ENCODE measurements at regions of chr12 and their contacts with region 1.

Region 1: GRCh38 chr12:26937875-26938700 is at the starts of genes FGFR1OP2 and INTS13:
- DNase-seq: peak; percentile 90 to 99 (median 96)
- ATAC-seq: peak; percentile 89
- H3K4me3 ChIP-seq: peak within 1 kb of the TSS; percentile 92 to 97
- H3K4me3 Mint-ChIP-seq: peak within 1 kb of the TSS; percentile 98
- H3K27ac ChIP-seq: peak within 1 kb of the TSS; percentile 89 to 94
- H3K27ac Mint-ChIP-seq: peak within 1 kb of the TSS; percentile 97
- H3K4me1 ChIP-seq: peaks cover 47% of the 10 kb centered on the region
- H3K4me1 Mint-ChIP-seq: peaks cover 74% of the 10 kb centered on the region
- H3K27me3 ChIP-seq: no peaks in the 10 kb centered on the region
- H3K27me3 Mint-ChIP-seq: no peaks in the 10 kb centered on the region
- CTCF ChIP-seq: no peak
- total RNA-seq, gene FGFR1OP2: 44.1 to 47.5 TPM
- total RNA-seq, gene INTS13: 11.8 to 12.1 TPM

Region 2: DNA sequence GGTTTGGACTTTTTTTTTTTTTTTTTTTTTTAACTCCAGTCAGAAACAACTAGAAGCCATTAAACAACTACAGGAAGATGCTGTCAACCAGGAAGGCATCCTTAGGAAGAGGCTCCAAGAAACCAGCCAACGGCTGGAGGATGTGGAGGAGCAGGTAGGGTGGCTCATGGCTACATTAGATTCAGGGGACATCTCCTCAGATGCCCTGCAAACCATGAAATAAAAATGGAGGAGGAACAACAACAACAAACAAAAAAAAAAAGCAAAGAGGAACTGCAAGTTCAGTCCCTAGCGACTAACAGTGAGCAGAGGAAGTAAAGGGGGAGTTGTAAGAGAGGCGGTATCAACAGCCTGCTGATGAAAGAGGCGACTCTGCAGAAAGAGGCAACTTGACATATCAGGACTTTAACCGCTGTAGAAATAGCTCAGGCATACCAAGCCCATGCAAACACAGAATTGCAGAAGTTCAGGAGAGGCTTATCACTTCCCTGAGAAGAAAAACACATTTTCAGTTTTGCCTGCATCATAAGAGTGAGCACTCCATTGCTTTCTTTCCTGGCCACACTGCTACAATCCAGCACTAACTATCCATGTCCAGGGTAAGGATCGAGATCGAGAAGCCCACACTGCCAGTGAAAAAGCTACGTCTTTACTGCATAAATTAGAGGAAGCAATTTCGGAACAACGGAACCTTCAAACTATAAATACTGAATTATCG is 1885.7 kb before region 1 on chr12:
- CTCF ChIA-PET with region 1: no interaction called
- POLR2A ChIA-PET with region 1: no interaction called
- intact Hi-C with region 1: loop called in 1 of 2 experiments (anchors 10 kb)
- DNase-seq: peak; percentile 20 to 90 (median 51)
- ATAC-seq: peak; percentile 70
- H3K4me3 ChIP-seq: peak overlapping the region; percentile 67 to 76
- H3K4me3 Mint-ChIP-seq: peak overlapping the region; percentile 97
- H3K27ac ChIP-seq: peak overlapping the region; percentile 79 to 92
- H3K27ac Mint-ChIP-seq: peak overlapping the region; percentile 98
- H3K4me1 ChIP-seq: peaks cover 38% of the 10 kb centered on the region
- H3K4me1 Mint-ChIP-seq: peaks cover 41% of the 10 kb centered on the region
- H3K27me3 ChIP-seq: no peaks in the 10 kb centered on the region
- H3K27me3 Mint-ChIP-seq: no peaks in the 10 kb centered on the region
- CTCF ChIP-seq: no peak

Region 3: DNA sequence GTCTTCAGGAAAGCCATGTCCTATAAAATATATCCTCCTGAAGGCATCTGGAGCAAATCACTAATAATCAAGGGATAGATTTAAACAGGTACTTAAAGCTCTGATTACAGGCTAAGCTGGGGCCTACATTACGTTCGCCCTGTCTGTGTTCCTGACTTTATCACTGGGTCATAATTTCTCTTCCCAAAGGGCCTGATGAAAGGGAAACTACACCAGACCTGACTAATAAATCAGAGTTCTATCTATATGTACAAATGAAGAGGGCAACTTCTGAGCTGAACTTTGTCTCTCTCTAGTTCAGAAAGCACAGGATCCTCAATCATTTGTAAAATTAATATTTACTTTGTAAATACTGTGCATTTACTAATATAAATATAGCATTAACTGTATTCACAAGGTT is 1023.5 kb before region 1 on chr12:
- CTCF ChIA-PET with region 1: no interaction called
- POLR2A ChIA-PET with region 1: no interaction called
- intact Hi-C with region 1: no loop called
- DNase-seq: no peak
- ATAC-seq: no peak
- H3K4me3 ChIP-seq: no peak overlapping the region
- H3K4me3 Mint-ChIP-seq: no peak overlapping the region
- H3K27ac ChIP-seq: no peak overlapping the region
- H3K27ac Mint-ChIP-seq: no peak overlapping the region
- H3K4me1 ChIP-seq: no peaks in the 10 kb centered on the region
- H3K4me1 Mint-ChIP-seq: no peaks in the 10 kb centered on the region
- H3K27me3 ChIP-seq: no peaks in the 10 kb centered on the region
- H3K27me3 Mint-ChIP-seq: no peaks in the 10 kb centered on the region
- CTCF ChIP-seq: no peak

Region 4: DNA sequence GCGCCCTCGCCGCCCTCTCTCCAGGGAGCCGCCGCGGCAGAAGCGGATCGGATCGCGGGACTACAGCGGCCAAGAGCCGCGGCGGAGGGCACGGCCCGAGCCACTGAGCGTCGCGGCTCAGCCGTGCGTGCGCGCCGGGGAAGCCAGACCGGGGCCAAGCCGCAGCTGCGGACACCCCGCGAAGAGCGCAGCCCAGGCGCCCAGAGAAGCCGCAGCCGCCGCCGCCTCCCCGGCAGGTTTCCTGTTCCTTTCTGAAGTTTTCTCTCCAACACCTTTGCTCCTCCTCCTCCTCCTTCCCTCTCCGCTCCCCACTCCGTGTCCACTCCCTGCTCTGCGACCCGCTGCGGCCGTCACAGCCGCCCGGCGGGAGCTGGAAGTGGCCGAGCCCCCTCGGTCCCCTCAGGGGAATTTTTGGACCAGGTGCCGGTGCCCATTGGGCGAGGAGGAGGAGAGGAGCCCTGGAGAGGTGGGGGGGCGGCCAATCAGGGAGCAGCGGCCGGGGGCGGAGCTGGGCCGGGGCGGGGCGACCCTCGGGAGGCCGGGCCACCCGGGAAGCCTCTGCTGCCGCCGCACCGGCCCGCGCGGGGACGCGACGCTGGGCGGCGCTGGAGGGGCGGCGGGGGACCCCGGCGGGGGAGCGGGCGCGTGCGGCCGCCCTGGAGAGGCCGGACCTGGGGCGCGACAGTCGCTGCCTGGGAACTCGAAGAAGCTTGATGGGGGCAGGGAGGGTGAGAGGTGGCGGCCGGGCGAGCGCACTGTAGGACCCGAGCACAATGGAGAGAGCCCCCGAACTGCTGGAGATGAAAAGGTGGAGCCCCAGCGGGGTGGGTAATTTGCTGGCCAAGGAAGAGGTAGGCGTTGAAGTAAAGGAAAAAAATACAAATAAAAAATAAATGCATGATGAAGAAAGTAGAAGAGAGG is 105.0 kb before region 1 on chr12 and contains the start of gene ITPR2:
- CTCF ChIA-PET with region 1: no interaction called
- POLR2A ChIA-PET with region 1: interaction called, 3 read pairs
- intact Hi-C with region 1: loop called (anchors 1 to 2 kb)
- DNase-seq: peak; percentile 80 to 95 (median 92)
- ATAC-seq: peak; percentile 92
- H3K4me3 ChIP-seq: peak within 1 kb of the TSS; percentile 63 to 89
- H3K4me3 Mint-ChIP-seq: peak within 1 kb of the TSS; percentile 97
- H3K27ac ChIP-seq: peak within 1 kb of the TSS; percentile 66 to 87
- H3K27ac Mint-ChIP-seq: peak within 1 kb of the TSS; percentile 98
- H3K4me1 ChIP-seq: peaks cover 9% of the 10 kb centered on the region
- H3K4me1 Mint-ChIP-seq: peaks cover 44% of the 10 kb centered on the region
- H3K27me3 ChIP-seq: no peaks in the 10 kb centered on the region
- H3K27me3 Mint-ChIP-seq: no peaks in the 10 kb centered on the region
- CTCF ChIP-seq: no peak
- total RNA-seq, gene ITPR2: 18.9 to 24.1 TPM

Region 5: DNA sequence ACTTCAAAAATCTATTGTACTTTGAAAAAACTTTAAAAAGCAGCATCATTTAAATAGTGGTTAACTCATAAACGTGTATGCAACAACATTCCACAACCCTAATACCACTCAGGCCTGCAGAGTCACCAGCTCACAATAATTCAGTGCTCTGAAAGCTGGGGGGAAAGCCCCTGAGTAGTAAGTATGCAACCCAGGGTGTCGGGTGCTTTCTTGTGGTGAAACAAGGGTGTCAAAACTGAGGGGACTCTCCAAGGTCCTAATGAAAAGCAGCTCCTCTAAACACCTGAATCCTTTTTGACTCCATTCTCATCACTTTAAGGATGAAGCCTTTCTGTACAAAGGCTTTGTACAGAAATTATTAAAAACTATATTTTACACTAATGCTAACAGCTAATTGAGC is 33.9 kb after region 1 on chr12:
- CTCF ChIA-PET with region 1: interaction called, 3 read pairs
- POLR2A ChIA-PET with region 1: interaction called, 3 read pairs
- intact Hi-C with region 1: loop called (anchors 1 to 5 kb)
- DNase-seq: peak; percentile 13 to 90 (median 59)
- ATAC-seq: peak; percentile 98
- H3K4me3 ChIP-seq: no peak overlapping the region
- H3K4me3 Mint-ChIP-seq: peak overlapping the region; percentile 18
- H3K27ac ChIP-seq: no peak overlapping the region
- H3K27ac Mint-ChIP-seq: peak overlapping the region; percentile 45
- H3K4me1 ChIP-seq: peaks cover 16% of the 10 kb centered on the region
- H3K4me1 Mint-ChIP-seq: peaks cover 17% of the 10 kb centered on the region
- H3K27me3 ChIP-seq: no peaks in the 10 kb centered on the region
- H3K27me3 Mint-ChIP-seq: no peaks in the 10 kb centered on the region
- CTCF ChIP-seq: no peak

Region 6: DNA sequence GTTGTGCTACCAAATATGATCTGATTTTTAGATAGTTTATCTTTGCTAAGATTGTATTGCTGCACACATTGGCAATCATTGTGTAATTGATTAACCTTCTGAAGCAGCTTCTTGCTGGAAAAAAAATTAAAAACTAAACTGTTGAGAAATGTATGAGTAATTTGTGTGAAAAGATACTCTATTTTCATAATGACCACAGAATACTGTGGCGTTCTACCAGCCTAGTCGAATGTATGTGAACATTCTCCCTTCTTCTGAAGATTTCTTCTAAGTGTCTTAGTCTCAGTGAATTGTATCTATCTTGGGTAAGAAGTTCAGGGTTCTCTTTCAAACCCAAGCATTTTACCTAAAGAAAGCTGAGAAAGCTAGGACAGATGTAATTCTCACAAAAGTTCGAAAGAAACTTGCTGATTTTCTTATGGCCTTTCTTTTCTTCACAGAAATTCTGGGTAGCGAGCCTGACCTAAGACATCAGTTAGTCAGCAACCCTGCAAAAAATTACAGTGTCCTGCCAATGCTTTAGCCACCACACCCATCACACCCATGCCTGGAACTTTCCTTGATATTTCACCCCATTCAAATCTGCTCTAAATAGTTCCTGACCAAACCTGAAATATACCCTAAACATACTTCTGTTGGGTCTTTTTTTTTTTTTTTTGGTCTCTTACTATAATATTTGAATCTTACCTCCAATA is 171.4 kb after region 1 on chr12:
- CTCF ChIA-PET with region 1: no interaction called
- POLR2A ChIA-PET with region 1: no interaction called
- intact Hi-C with region 1: no loop called
- DNase-seq: no peak
- ATAC-seq: no peak
- H3K4me3 ChIP-seq: no peak overlapping the region
- H3K4me3 Mint-ChIP-seq: no peak overlapping the region
- H3K27ac ChIP-seq: no peak overlapping the region
- H3K27ac Mint-ChIP-seq: no peak overlapping the region
- H3K4me1 ChIP-seq: peaks cover 6% of the 10 kb centered on the region
- H3K4me1 Mint-ChIP-seq: peaks cover 5% of the 10 kb centered on the region
- H3K27me3 ChIP-seq: no peaks in the 10 kb centered on the region
- H3K27me3 Mint-ChIP-seq: no peaks in the 10 kb centered on the region
- CTCF ChIP-seq: no peak

Region 7: GRCh38 chr12:27523642-27524493 is 585.8 kb after region 1 on chr12 and contains the start of gene PPFIBP1:
- CTCF ChIA-PET with region 1: no interaction called
- POLR2A ChIA-PET with region 1: no interaction called
- intact Hi-C with region 1: loop called in 1 of 2 experiments (anchors 10 kb)
- DNase-seq: peak; percentile 93 to 100 (median 98)
- ATAC-seq: peak; percentile 96
- H3K4me3 ChIP-seq: peak within 1 kb of the TSS; percentile 89 to 91
- H3K4me3 Mint-ChIP-seq: peak within 1 kb of the TSS; percentile 98
- H3K27ac ChIP-seq: peak within 1 kb of the TSS; percentile 76 to 80
- H3K27ac Mint-ChIP-seq: peak within 1 kb of the TSS; percentile 96
- H3K4me1 ChIP-seq: peaks cover 14% of the 10 kb centered on the region
- H3K4me1 Mint-ChIP-seq: peaks cover 24% of the 10 kb centered on the region
- H3K27me3 ChIP-seq: no peaks in the 10 kb centered on the region
- H3K27me3 Mint-ChIP-seq: peaks cover 8% of the 10 kb centered on the region
- CTCF ChIP-seq: no peak
- total RNA-seq, gene PPFIBP1: 1.1 to 1.9 TPM

Region 8: GRCh38 chr12:28190321-28191050 is 1252.4 kb after region 1 on chr12 and contains the start of gene CCDC91:
- CTCF ChIA-PET with region 1: no interaction called
- POLR2A ChIA-PET with region 1: no interaction called
- intact Hi-C with region 1: loop called (anchors 2 to 10 kb)
- DNase-seq: peak; percentile 80 to 96 (median 89)
- ATAC-seq: peak; percentile 77
- H3K4me3 ChIP-seq: peak within 1 kb of the TSS; percentile 58 to 90
- H3K4me3 Mint-ChIP-seq: peak within 1 kb of the TSS; percentile 97
- H3K27ac ChIP-seq: peak within 1 kb of the TSS; percentile 91 to 100
- H3K27ac Mint-ChIP-seq: peak within 1 kb of the TSS; percentile 99
- H3K4me1 ChIP-seq: peaks cover 27% of the 10 kb centered on the region
- H3K4me1 Mint-ChIP-seq: peaks cover 67% of the 10 kb centered on the region
- H3K27me3 ChIP-seq: no peaks in the 10 kb centered on the region
- H3K27me3 Mint-ChIP-seq: no peaks in the 10 kb centered on the region
- CTCF ChIP-seq: no peak
- total RNA-seq, gene CCDC91: 54.3 to 63.1 TPM